Heart left ventricle (tissue), 16 donors: ENCODE measurements at regions of chr14 and their contacts with region 1.

Region 1: GRCh38 chr14:65102441-65103149 is at the start of gene MAX:
- DNase-seq: peak; percentile 98 to 99 (median 99)
- ATAC-seq: peak; percentile 96 to 97 (median 97)
- H3K4me3 ChIP-seq: peak within 1 kb of the TSS; percentile 67 to 99 (median 90)
- H3K27ac ChIP-seq: peak within 1 kb of the TSS; percentile 77 to 97 (median 88)
- H3K4me1 ChIP-seq: peaks cover 7 to 47% (median 36%) of the 10 kb centered on the region in 12 donors
- H3K27me3 ChIP-seq: no peaks in the 10 kb centered on the region
- CTCF ChIP-seq: no peak
- POLR2A ChIP-seq: peak in 1 of 2 donors; percentile 66
- total RNA-seq, gene MAX: 42.3 to 102 (median 79.5) TPM

Region 2: GRCh38 chr14:65019944-65020566 is 82.5 kb before region 1 on chr14:
- intact Hi-C with region 1: loop called in 2 of 10 experiments (anchors 5 to 10 kb)
- DNase-seq: peak in 2 of 5 donors; percentile 23 to 28
- ATAC-seq: peak; percentile 84 to 92 (median 88)
- H3K4me3 ChIP-seq: no peak overlapping the region
- H3K27ac ChIP-seq: peak overlapping the region in 5 of 12 donors; percentile 1 to 13 (median 3)
- H3K4me1 ChIP-seq: peaks cover 0 to 14% (median 8%) of the 10 kb centered on the region in 12 donors
- H3K27me3 ChIP-seq: no peaks in the 10 kb centered on the region
- CTCF ChIP-seq: peak; percentile 56 to 89 (median 70)
- POLR2A ChIP-seq: no peak

Region 3: GRCh38 chr14:65035049-65035448 is 67.5 kb before region 1 on chr14:
- intact Hi-C with region 1: loop called in 2 of 10 experiments (anchors 5 to 10 kb)
- DNase-seq: peak in 4 of 5 donors; percentile 42 to 69 (median 59)
- ATAC-seq: peak in 2 of 4 donors; percentile 7 to 24
- H3K4me3 ChIP-seq: no peak overlapping the region
- H3K27ac ChIP-seq: peak overlapping the region in 5 of 12 donors; percentile 9 to 56 (median 41)
- H3K4me1 ChIP-seq: peaks cover 0 to 24% (median 11%) of the 10 kb centered on the region in 12 donors
- H3K27me3 ChIP-seq: no peaks in the 10 kb centered on the region
- CTCF ChIP-seq: no peak
- POLR2A ChIP-seq: no peak